ENCODE measurements at regions of chr11 and their contacts with region 1.

Region 1: GRCh38 chr11:27076121-27076589 is 35.5 kb downstream of the BBOX1 start:
- DNase-seq: no peak
- ATAC-seq: no peak
- H3K4me3 ChIP-seq: no peak overlapping the region
- H3K4me3 Mint-ChIP-seq: no peak overlapping the region
- H3K27ac ChIP-seq: no peak overlapping the region
- H3K27ac Mint-ChIP-seq: no peak overlapping the region
- H3K4me1 ChIP-seq: no peaks in the 10 kb centered on the region
- H3K4me1 Mint-ChIP-seq: no peaks in the 10 kb centered on the region
- H3K27me3 ChIP-seq: no peaks in the 10 kb centered on the region
- H3K27me3 Mint-ChIP-seq: no peaks in the 10 kb centered on the region
- CTCF ChIP-seq: no peak

Region 2: GRCh38 chr11:27012234-27012921 is 63.8 kb before region 1 on chr11:
- intact Hi-C with region 1: loop called (anchors 10 kb)
- DNase-seq: no peak
- ATAC-seq: no peak
- H3K4me3 ChIP-seq: no peak overlapping the region
- H3K4me3 Mint-ChIP-seq: no peak overlapping the region
- H3K27ac ChIP-seq: no peak overlapping the region
- H3K27ac Mint-ChIP-seq: no peak overlapping the region
- H3K4me1 ChIP-seq: no peaks in the 10 kb centered on the region
- H3K4me1 Mint-ChIP-seq: no peaks in the 10 kb centered on the region
- H3K27me3 ChIP-seq: no peaks in the 10 kb centered on the region
- H3K27me3 Mint-ChIP-seq: no peaks in the 10 kb centered on the region
- CTCF ChIP-seq: no peak

Region 3: DNA sequence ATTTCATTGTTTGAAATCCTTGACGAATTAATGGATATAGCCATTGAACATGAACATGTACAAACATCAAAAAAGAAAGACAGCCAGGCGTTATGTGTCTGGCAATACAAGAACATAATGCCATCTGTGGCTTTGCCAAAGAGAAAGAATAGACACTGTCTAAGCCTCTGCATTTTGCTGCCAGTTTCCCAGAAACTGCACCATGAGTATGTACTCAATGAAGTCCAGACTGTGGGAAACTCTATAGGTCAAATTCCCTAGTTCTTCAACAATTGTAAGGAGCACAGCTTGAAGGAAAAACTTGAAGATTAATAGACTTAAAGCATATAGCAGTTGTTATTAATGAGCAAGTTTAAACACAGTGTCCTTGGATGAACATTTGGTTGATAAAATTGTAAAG is 35.7 kb after region 1 on chr11:
- intact Hi-C with region 1: no loop called
- DNase-seq: no peak
- ATAC-seq: no peak
- H3K4me3 ChIP-seq: no peak overlapping the region
- H3K4me3 Mint-ChIP-seq: no peak overlapping the region
- H3K27ac ChIP-seq: no peak overlapping the region
- H3K27ac Mint-ChIP-seq: no peak overlapping the region
- H3K4me1 ChIP-seq: no peaks in the 10 kb centered on the region
- H3K4me1 Mint-ChIP-seq: no peaks in the 10 kb centered on the region
- H3K27me3 ChIP-seq: no peaks in the 10 kb centered on the region
- H3K27me3 Mint-ChIP-seq: no peaks in the 10 kb centered on the region
- CTCF ChIP-seq: no peak